Activated CD4-positive, alpha-beta T cell treated with anti-CD3 and anti-CD28 coated beads for 36 hours (primary cell): ENCODE measurements at regions of chr17 and their contacts with region 1.

Region 1: DNA sequence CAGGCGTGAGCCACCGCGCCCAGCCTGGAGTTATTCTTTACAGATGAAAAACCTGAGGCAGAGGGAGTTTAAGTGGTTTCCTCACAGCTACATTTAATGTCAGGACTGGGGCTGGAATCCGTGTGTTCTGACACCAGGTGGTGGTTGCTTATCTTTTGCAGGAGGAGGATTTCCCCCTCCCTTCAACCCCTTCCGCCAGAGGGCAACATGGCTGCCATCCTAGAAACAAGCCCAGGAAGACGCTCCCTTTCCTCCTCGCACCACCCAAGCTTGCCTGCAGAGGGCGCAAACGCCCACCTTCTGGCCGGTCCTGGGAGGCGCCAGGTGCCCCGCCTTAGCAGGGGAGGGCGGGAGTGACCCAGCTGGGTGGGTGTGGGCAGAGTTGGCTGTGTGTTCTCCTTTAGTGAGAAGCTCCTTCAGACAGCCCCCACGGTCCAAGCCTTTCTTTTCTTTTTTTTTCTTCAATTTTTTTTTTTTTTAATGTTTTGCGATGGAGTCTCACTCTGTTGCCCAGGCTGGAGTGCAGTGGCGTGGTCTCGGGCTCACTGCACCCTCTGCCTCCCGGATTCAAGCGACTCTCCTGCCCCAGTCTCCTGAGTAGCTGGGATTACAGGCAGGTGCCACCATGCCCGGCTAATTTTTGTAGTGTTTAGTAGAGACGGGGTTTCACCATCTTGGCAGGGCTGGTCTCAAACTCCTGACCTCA is 9.9 kb upstream of the RAP1GAP2 start:
- DNase-seq: peak; percentile 96
- ATAC-seq: peak; percentile 100
- H3K4me3 Mint-ChIP-seq: no peak overlapping the region
- H3K27ac Mint-ChIP-seq: peak overlapping the region; percentile 31
- H3K4me1 Mint-ChIP-seq: peaks cover 3% of the 10 kb centered on the region
- H3K27me3 Mint-ChIP-seq: peaks cover 7% of the 10 kb centered on the region

Region 2: DNA sequence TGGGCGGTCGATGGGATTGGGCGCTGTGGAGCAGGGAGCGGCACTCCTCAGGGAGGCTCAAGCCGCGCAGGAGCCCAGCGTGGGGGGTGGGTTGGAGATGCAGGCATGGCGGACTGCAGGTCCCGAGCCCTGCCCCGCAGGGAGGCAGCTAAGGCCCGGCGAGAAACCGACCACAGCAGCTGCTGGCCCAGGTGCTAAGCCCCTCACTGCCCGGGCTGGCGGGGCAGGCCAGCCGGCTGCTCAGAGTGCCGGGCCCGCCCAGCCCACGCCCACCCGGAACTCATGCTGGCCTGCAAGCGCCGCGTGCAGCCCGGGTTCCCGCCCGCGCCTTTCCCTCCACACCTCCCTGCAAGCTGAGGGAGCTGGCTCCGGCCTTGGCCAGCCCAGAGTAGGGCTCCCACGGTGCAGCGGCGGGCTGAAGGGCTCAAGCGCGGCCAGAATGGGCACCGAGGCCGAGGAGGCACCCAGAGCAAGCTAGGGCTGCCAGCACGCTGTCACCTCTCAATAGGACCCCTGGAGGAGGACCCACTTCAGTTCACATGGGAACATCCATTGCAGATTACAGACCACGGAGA is 254.1 kb before region 1 on chr17:
- CTCF ChIA-PET with region 1: no interaction called
- POLR2A ChIA-PET with region 1: no interaction called
- intact Hi-C with region 1: no loop called
- DNase-seq: no peak
- ATAC-seq: no peak
- H3K4me3 Mint-ChIP-seq: no peak overlapping the region
- H3K27ac Mint-ChIP-seq: no peak overlapping the region
- H3K4me1 Mint-ChIP-seq: peaks cover 8% of the 10 kb centered on the region
- H3K27me3 Mint-ChIP-seq: no peaks in the 10 kb centered on the region

Region 3: DNA sequence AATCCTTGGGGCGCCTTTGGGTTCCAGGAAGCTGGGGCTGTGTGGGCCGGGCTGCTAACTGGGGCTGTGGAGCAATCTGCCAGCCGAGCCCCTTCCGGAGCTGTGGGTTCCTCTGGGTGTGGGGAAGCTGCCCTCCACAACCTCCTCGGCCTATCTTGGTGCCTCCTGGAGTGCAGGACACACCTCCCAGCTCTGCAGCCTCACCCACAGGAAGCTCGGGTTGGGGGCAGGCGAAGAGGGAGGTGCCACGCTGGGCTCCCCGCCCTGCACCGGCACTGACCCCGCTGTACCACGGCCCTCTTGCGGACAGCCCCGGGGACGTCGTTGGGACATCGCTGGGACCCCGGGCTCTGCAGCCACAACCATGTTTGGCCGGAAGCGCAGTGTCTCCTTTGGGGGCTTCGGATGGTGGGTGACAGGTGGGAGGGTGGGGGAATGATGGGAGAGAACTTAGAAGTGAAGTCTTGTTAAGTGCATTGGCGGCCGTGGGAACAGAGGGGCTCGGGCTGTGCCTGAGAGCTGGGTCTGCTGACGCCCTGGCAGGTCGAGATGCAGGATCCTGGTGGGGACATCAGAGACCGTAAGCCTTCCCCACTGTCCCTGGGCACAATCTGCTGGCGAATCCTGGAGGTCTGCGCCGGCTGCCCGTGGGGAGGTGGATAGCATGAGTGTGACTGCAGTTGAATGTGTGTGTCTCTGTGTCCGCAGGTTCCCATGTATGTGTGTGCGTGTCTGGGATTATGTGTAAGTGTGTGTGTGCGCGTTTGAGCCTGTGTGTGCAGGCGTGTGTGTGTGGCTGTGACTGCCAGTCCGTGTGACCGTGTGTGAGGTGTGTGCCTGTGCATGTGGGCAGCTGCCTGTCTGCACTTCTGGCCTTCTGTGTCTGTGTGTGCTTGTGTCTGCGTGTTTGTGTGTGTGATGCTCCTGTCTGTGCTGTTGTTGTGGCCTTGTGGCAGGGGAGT is 10.1 kb after region 1 on chr17 and contains the start of gene RAP1GAP2:
- CTCF ChIA-PET with region 1: interaction called, 11 read pairs
- POLR2A ChIA-PET with region 1: no interaction called
- intact Hi-C with region 1: no loop called
- DNase-seq: peak; percentile 72
- ATAC-seq: peak; percentile 79
- H3K4me3 Mint-ChIP-seq: peak within 1 kb of the TSS; percentile 50
- H3K27ac Mint-ChIP-seq: peak within 1 kb of the TSS; percentile 12
- H3K4me1 Mint-ChIP-seq: peaks cover 70% of the 10 kb centered on the region
- H3K27me3 Mint-ChIP-seq: peaks cover 16% of the 10 kb centered on the region
- total RNA-seq, gene RAP1GAP2: 0.64 to 0.86 TPM

Region 4: DNA sequence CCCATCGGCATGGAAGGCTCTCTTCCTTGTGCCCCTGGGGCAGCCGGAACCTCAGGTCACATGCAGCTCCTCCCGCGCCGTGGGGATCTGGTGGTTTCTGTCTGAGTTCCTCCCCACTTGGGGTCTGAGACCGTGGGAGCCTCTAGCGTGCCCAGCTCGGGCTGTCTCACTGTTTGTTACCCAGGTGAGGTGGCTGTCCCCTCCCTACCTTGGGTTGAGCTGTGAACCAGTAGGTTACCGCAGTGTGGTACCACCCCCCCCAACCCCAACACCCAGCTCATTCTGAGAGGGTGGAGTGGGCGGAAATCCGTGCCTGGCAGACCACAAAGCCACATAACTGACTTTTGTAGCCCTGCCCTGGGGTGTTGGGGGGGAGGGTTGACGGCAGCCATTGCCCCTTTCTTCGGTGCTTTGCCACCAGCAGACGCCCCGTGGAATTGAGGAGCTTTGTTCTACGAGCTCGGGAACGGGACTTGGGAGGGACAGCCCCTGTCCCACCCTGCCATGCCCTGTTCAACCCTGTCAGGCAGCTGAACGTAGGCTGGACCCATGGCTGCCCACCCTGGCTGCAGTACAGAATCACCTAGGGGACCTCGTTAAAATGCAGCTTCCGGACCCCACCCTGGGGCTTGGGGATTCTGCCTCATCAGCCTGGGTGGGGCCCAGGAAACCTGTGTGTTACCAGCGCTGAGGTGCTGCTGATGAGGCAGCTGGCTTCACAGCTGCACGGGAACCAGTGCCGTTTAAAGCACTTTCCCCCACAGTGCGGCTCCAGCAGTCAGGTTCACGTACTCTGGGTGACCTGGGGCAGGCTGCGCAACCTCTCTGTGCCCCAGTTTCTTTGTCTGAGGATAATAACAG is 28.4 kb after region 1 on chr17:
- CTCF ChIA-PET with region 1: interaction called, 9 read pairs
- POLR2A ChIA-PET with region 1: no interaction called
- intact Hi-C with region 1: loop called (anchors 1 to 2 kb)
- DNase-seq: peak; percentile 92
- ATAC-seq: peak; percentile 80
- H3K4me3 Mint-ChIP-seq: peak overlapping the region; percentile 38
- H3K27ac Mint-ChIP-seq: no peak overlapping the region
- H3K4me1 Mint-ChIP-seq: peaks cover 20% of the 10 kb centered on the region
- H3K27me3 Mint-ChIP-seq: peaks cover 10% of the 10 kb centered on the region

Region 5: DNA sequence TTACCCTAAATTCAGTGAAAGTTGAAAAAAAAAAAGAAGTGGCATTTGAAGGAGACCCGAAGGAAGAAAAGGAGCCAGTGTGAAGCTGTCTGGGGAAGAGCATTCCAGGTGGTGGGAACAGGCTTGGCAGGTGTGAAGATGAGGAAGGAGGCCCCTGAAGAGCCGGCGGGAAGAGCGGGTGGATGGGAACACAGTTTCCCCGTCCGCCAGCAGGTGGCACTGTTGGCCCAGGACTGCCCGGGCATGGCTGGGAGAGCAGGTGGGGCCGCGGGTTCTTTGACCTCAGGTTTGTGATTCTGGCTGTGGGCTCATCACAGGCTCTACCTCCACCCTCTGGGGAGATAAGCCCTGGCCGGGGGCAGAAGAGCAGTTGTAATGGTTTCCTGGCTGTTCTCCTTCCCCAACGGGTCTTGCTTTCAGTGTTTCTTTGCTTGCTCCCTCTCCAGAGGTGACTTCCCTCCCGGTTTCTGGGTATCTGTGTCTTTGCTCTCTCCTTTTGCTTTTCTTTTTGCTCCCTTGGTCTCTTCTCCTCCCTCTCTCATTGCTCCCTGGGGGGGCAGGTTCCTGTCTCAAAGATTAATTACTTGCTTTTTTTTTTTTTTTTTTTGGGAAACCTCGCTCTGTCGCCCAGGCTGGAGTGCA is 42.2 kb after region 1 on chr17:
- CTCF ChIA-PET with region 1: interaction called, 7 read pairs
- POLR2A ChIA-PET with region 1: no interaction called
- intact Hi-C with region 1: loop called in 1 of 2 experiments (anchors 2 kb)
- DNase-seq: peak; percentile 89
- ATAC-seq: peak; percentile 88
- H3K4me3 Mint-ChIP-seq: no peak overlapping the region
- H3K27ac Mint-ChIP-seq: no peak overlapping the region
- H3K4me1 Mint-ChIP-seq: peaks cover 12% of the 10 kb centered on the region
- H3K27me3 Mint-ChIP-seq: no peaks in the 10 kb centered on the region

Region 6: GRCh38 chr17:2837147-2837561 is 50.8 kb after region 1 on chr17:
- CTCF ChIA-PET with region 1: interaction called, 15 read pairs
- POLR2A ChIA-PET with region 1: no interaction called
- intact Hi-C with region 1: loop called (anchors 1 kb)
- DNase-seq: peak; percentile 79
- ATAC-seq: peak; percentile 100
- H3K4me3 Mint-ChIP-seq: no peak overlapping the region
- H3K27ac Mint-ChIP-seq: no peak overlapping the region
- H3K4me1 Mint-ChIP-seq: peaks cover 8% of the 10 kb centered on the region
- H3K27me3 Mint-ChIP-seq: no peaks in the 10 kb centered on the region

Region 7: DNA sequence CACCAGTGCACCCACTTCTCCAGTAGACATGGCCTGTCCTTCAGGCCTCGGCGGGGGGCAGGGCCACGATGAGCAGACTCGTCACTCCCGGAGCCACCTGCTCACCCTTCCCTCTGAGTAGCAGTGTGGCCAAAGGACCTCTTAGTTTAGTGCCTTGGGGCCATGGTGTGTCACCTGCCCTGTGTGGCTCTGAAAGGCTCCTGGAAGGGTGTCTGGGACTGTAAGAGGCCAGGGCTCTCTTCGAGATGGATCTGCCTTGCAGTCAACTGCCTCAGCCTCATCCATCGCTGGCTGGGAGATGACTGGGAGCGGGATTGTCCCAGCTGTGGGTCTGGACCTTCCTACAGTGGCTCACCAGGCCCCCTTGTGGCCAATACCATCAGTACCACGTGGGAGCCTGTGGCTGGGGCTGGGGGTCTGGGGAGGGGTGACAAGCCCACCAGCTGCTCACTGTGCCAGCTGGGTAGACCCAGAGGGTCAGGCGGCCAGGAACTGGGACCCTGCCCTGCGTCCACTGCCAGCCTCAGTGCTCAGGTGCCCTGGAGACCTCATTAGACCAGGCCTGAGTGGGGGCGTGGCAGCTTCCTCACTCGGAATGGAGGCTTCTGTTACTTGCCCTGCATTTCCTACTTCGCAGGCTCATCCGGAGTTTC is 143.7 kb after region 1 on chr17:
- CTCF ChIA-PET with region 1: interaction called, 3 read pairs
- POLR2A ChIA-PET with region 1: no interaction called
- intact Hi-C with region 1: loop called in 1 of 2 experiments (anchors 1 kb)
- DNase-seq: peak; percentile 59
- ATAC-seq: peak; percentile 57
- H3K4me3 Mint-ChIP-seq: no peak overlapping the region
- H3K27ac Mint-ChIP-seq: no peak overlapping the region
- H3K4me1 Mint-ChIP-seq: peaks cover 10% of the 10 kb centered on the region
- H3K27me3 Mint-ChIP-seq: no peaks in the 10 kb centered on the region

Region 8: GRCh38 chr17:3012926-3013581 is 226.7 kb after region 1 on chr17:
- CTCF ChIA-PET with region 1: interaction called, 4 read pairs
- POLR2A ChIA-PET with region 1: no interaction called
- intact Hi-C with region 1: loop called (anchors 2 to 5 kb)
- DNase-seq: peak; percentile 78
- ATAC-seq: peak; percentile 87
- H3K4me3 Mint-ChIP-seq: no peak overlapping the region
- H3K27ac Mint-ChIP-seq: no peak overlapping the region
- H3K4me1 Mint-ChIP-seq: no peaks in the 10 kb centered on the region
- H3K27me3 Mint-ChIP-seq: no peaks in the 10 kb centered on the region